ENCODE measurements at regions of chr17 and their contacts with region 1.

Region 1: DNA sequence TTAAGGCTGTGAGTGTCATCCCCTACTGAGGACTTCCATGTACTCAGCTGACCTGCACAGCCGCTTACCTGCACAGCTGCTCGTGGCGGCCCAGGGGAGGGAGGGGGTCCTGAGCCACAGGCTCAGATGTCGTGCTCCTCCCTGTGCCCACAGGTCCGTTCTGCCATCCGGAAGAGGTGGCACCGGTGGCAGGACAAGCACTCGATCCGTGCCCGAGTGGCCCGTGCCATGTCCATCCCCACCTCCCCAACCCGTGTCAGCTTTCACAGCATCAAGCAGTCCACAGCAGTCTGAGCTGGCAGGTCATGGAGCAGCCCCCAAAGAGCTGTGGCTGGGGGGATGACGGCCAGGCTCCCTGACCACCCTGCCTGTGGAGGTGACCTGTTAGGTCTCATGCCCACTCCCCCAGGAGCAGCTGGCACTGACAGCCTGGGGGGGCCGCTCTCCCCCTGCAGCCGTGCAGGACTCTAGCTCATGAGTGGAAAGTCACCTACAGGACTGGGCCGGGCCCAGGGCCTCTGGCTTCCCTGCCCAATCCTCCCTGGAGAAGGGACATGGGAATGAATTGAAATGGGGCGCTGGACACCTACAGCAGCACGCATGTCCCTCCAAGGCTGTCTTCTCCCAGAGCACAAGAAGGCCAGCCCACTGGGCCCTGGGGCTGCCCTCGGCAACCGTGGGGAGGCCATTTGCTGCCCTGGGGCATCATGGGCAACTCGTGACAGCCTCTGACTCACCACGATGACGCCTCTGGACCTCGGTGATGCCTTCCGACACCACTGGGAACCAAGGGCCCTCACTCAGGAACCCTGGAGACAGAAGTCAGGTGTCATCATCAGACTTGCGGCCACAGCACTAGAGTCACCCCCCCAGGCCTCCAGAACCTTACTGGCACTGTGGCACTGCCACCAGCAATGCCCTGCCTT is 9.9 kb upstream of the SPPL2C start:
- DNase-seq: peak in 1 of 10 donors; percentile 69

Region 2: GRCh38 chr17:45719335-45720071 is 115.2 kb before region 1 on chr17:
- intact Hi-C with region 1: loop called (anchors 5 kb)
- DNase-seq: peak in 8 of 10 donors; percentile 29 to 91 (median 56)